AG04450 (cell line): ENCODE measurements at regions of chr16 and their contacts with region 1.

Region 1: GRCh38 chr16:80924372-80924978 is 82.2 kb downstream of the CMC2 start:
- DNase-seq: no peak
- H3K4me3 ChIP-seq: no peak overlapping the region
- H3K27ac ChIP-seq: no peak overlapping the region
- H3K27me3 ChIP-seq: peaks cover 3% of the 10 kb centered on the region
- CTCF ChIP-seq: peak; percentile 65

Region 2: GRCh38 chr16:80940069-80940856 is 15.8 kb after region 1 on chr16:
- CTCF ChIA-PET with region 1: interaction called, 16 read pairs
- POLR2A ChIA-PET with region 1: no interaction called
- DNase-seq: no peak
- H3K4me3 ChIP-seq: no peak overlapping the region
- H3K27ac ChIP-seq: no peak overlapping the region
- H3K27me3 ChIP-seq: no peaks in the 10 kb centered on the region
- CTCF ChIP-seq: no peak